ENCODE measurements at regions of chr9 and their contacts with region 1.

Region 1: GRCh38 chr9:122350638-122351355 is 20.0 kb upstream of the PTGS1 start:
- DNase-seq: peak; percentile 63
- H3K4me3 Mint-ChIP-seq: no peak overlapping the region
- H3K27ac Mint-ChIP-seq: no peak overlapping the region
- H3K4me1 Mint-ChIP-seq: peaks cover 15% of the 10 kb centered on the region
- H3K27me3 Mint-ChIP-seq: peaks cover 27% of the 10 kb centered on the region

Region 2: DNA sequence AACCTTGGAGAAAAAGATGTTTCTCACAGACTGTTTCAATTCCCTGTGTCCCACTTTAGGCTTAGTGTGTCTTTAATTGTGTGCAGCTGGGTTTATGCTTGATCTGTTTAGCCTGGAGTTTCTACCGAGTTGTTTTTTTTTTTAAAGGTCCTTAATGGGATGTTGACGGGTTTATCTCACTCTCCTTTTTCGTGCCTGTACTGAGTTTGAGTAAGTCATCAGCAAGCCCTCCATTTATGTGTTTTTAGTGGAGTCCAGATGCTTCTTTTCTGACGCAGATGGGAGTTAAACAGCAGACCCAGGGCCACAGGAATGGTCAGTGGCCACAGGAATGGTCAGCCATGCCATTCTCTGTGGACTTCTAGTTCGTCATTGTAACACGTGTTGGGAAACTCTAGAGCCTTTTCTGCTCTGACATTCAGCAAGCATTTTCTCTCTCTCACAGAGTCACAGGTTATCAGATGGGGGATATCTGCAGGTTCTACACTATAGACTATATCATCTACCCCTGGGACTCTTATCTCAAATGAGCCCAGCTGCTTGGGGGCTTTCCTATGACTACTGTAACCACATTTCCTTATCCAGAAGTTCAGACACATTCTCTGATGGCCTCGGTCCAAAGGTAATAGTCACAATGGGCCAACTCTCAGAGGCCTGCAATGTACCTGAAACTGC is 448.2 kb before region 1 on chr9:
- intact Hi-C with region 1: no loop called
- DNase-seq: no peak
- H3K4me3 Mint-ChIP-seq: no peak overlapping the region
- H3K27ac Mint-ChIP-seq: no peak overlapping the region
- H3K4me1 Mint-ChIP-seq: no peaks in the 10 kb centered on the region
- H3K27me3 Mint-ChIP-seq: peaks cover 10% of the 10 kb centered on the region

Region 3: DNA sequence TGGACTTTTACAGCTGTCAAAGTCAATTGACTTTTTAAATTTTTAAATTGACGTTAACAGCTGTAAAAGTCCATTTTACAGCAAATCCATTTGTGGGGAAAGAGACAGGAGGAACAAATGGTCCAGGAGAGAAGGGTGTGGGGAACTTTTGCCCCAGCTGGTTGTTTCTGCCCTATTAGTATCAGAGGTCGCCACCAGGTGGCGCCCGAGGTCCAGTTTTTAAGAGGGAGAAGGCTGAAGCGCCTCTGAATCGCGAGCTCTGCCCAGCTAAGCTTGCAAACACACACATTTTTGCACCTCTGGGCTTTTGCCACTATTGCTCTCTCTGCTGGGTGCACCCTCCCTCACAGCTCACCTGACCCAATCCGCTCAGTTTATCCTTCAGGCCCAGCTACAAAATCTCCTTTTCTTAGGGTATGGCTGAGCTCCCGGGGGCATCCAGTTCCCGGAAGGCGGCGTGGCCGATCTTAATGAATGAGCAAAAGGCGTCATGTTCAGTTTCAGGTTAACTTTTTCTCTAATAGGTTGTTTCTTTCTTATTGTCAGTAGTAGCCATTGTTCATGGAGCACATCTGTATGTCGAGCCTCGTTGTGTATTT is 251.4 kb before region 1 on chr9:
- intact Hi-C with region 1: loop called (anchors 1 kb)
- DNase-seq: peak; percentile 58
- H3K4me3 Mint-ChIP-seq: no peak overlapping the region
- H3K27ac Mint-ChIP-seq: no peak overlapping the region
- H3K4me1 Mint-ChIP-seq: peaks cover 17% of the 10 kb centered on the region
- H3K27me3 Mint-ChIP-seq: peaks cover 9% of the 10 kb centered on the region

Region 4: DNA sequence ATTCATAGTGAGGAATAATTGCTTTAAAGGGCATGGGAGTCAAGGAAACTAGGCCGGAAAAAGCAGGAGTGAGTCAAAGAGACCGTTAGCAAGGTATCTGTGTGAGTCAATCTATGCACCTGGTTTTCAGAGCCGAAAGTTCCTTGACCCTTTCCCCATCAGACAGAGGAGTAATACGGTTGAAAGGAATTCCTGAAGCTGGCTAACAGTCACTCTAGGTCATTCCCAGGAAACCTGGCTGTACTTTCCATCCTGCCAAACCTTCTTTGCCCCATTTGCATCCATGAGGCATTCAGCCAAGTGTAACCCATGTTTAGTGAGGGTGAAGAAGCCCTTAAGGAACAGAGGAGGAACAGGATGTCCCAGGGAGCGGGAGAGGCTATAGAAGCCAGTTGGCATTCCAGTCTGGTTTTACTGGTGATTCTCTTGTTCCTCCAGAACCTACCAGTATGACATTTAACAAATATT is 102.3 kb before region 1 on chr9:
- intact Hi-C with region 1: loop called (anchors 10 kb)
- DNase-seq: no peak
- H3K4me3 Mint-ChIP-seq: no peak overlapping the region
- H3K27ac Mint-ChIP-seq: no peak overlapping the region
- H3K4me1 Mint-ChIP-seq: no peaks in the 10 kb centered on the region
- H3K27me3 Mint-ChIP-seq: no peaks in the 10 kb centered on the region